Prostate gland (tissue), 2 donors: ENCODE measurements at regions of chr12 and their contacts with region 1.

Region 1: DNA sequence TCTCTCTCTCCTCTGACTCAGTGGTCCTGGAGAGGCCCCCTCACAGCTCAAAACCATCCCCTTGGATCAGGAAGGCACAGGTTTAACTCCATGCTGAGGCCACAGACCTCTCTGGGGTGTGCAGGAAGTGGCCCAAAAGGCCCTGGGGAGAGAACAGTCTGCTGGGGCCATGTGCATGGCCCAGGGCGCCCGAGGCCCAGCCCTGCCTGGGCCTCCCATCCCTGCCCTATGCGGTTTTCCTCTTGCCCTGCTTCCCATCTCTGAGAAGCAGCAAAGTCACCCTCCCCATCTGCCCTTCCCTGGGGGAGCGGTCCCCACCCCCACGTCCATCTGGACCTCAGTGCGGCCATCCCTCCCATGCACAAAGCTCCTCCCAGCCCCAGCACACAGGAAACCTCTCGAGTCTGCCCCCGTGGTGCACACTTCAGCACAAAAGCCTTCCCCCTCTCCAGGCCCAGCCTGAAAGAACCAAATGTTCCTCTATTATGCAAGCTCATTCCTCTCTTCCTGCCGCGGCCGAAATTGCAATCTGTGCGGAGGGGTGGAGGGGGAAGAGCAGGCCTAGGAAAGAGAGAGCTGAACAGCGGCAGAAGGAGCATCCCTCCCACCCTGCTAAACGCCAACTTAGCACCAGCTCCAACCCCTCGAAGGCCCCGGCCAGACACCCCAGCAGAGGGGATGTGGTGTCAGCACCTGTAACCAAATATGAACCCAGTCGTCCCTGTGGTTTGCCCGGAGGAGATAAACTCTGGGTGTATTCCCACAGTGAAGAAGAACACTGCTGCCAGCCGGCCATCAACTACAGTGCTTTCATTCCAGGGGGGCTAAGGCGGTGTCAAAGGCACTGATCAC is 108.5 kb downstream of the SCARB1 start:
- DNase-seq: peak; percentile 72
- H3K4me3 ChIP-seq: no peak overlapping the region
- H3K27ac ChIP-seq: peak overlapping the region; percentile 73 to 78
- H3K4me1 ChIP-seq: peaks cover 5% of the 10 kb centered on the region
- H3K27me3 ChIP-seq: no peaks in the 10 kb centered on the region
- CTCF ChIP-seq: peak in 1 of 4 experiments; percentile 8
- POLR2A ChIP-seq: no peak

Region 2: GRCh38 chr12:124032265-124032886 is 722.8 kb before region 1 on chr12:
- intact Hi-C with region 1: no loop called
- DNase-seq: peak; percentile 41
- H3K4me3 ChIP-seq: no peak overlapping the region
- H3K27ac ChIP-seq: no peak overlapping the region
- H3K4me1 ChIP-seq: no peaks in the 10 kb centered on the region
- H3K27me3 ChIP-seq: no peaks in the 10 kb centered on the region
- CTCF ChIP-seq: peak; percentile 57 to 75 (median 67)
- POLR2A ChIP-seq: no peak

Region 3: DNA sequence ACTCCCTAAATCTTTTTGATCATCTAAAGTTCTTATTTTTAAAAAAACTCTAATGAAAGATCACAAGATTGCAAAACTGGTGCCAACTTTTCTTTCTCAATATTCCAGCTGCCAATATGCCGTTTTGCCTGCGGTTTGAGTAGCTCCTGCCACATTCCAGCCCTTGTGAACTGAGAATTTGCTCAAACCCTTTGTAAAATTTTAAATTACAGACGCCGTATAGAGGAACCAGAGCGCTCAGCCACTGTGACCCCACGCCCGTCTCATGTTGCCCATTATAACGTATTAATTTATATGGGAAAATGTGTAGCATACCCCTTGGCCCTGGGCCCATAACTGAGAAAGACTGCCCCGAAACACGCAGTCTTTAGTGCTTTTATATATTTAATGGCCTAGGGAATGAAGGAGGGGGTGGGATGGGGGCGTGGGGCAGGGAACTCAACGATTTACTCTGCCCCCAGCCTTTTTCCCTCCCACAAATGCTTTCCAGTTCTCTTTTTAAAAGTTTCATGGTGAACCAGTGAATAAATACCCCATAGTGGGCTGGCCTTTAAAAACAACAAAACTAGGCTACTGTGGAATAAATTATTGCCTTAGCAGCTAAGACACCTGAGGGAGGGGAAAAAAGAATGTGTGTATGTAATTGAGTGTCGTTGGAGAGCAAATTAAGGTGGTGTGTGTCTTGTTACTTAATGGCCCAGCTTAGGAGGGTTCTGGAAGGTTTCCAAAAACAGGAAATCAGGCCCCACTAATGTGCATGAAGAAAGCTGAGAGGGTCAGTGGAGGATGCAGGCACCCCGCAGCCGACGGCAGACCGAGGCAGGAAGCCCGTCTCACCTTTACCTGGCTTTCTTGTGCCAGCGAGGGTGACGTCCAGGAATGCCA is 506.0 kb before region 1 on chr12:
- intact Hi-C with region 1: no loop called
- DNase-seq: no peak
- H3K4me3 ChIP-seq: no peak overlapping the region
- H3K27ac ChIP-seq: no peak overlapping the region
- H3K4me1 ChIP-seq: no peaks in the 10 kb centered on the region
- H3K27me3 ChIP-seq: no peaks in the 10 kb centered on the region
- CTCF ChIP-seq: no peak
- POLR2A ChIP-seq: no peak

Region 4: GRCh38 chr12:124720004-124720680 is 35.0 kb before region 1 on chr12:
- intact Hi-C with region 1: loop called (anchors 2 kb)
- DNase-seq: no peak
- H3K4me3 ChIP-seq: no peak overlapping the region
- H3K27ac ChIP-seq: peak overlapping the region; percentile 80 to 82
- H3K4me1 ChIP-seq: peaks cover 12% of the 10 kb centered on the region
- H3K27me3 ChIP-seq: no peaks in the 10 kb centered on the region
- CTCF ChIP-seq: peak in 2 of 4 experiments; percentile 52 to 56
- POLR2A ChIP-seq: no peak